ENCODE measurements at regions of chr2 and their contacts with region 1.

Region 1: DNA sequence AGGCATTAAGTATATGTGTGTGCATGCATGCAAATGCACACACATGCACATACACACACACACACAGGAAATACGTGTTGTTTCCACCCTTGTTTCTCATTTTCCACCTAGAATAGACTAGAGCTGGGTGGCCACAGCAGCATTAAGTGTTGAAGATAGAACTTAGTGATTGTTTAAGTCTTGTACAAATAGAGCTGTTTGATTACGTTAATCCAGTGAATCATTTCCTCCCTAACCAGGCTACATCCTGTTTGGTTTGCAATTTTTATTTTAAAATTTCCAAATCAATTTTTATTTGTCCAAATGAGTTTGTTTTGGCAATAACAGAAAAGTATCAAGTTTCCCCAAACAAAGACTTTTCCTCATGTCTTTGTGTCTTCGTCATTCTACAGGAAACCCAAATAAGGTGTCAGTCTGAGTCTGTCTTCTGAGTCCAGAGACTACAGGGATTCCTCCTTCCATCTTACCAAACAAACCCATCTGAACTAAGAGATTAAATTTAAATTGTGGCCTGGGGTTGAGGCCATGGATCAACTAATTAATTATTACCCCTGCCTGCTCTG is 74.6 kb upstream of the GALNT5 start:
- DNase-seq: no peak
- ATAC-seq: no peak
- H3K4me3 ChIP-seq: no peak overlapping the region
- H3K27ac ChIP-seq: no peak overlapping the region
- H3K4me1 ChIP-seq: peaks cover 0 to 6% of the 10 kb centered on the region in 2 experiments; a peak in 2 of 4 replicates
- H3K27me3 ChIP-seq: no peaks in the 10 kb centered on the region
- CTCF ChIP-seq: no peak
- POLR2A ChIP-seq: no peak
- RAD21 ChIP-seq: no peak

Region 2: DNA sequence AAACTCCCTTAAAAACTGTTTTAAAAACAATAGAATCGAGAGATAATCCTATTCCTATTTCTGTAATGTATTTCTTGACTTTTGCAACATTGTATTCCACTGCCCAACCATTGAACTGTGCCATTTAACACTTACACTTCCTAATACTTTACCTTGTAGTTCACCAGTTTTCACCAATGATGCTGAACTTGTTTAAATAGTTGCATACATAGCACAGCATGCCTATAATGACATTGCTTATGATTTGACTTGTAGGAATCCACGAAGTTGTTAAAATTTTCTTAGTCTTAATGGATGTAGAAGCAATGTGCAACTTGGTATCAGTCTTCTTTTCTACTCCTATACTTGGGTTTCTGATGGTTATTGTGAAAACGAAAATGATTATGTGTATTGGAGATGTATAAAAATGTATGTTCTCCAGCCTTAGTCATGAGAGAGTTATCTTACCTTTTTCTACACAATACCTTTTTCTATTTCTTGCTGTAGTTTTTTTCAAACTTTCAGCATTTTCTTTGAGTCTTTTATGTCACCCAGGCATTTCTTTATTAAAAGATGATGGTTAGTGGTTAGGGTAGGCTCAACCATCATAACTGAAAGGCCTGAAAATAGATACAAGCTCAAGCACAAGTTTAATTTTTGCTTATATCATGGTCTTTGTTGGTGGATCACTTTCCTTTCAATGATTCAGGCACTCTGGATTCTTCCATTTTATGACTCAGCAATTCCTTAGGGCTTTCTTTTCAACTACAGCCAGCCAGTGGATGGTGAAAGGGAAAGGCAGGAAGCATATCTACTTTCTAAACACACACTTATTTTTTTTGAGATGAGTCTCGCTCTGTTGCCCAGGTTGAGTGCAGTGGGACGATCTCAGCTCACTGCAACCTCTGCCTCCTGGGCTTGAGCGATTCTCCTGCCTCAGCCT is 737.4 kb before region 1 on chr2:
- CTCF ChIA-PET with region 1: no interaction called
- POLR2A ChIA-PET with region 1: no interaction called
- RAD21 ChIA-PET with region 1: no interaction called
- intact Hi-C with region 1: no loop called
- DNase-seq: no peak
- ATAC-seq: no peak
- H3K4me3 ChIP-seq: no peak overlapping the region
- H3K27ac ChIP-seq: no peak overlapping the region
- H3K4me1 ChIP-seq: peaks cover 0 to 17% of the 10 kb centered on the region in 2 experiments; a peak in 2 of 4 replicates
- H3K27me3 ChIP-seq: no peaks in the 10 kb centered on the region
- CTCF ChIP-seq: no peak
- POLR2A ChIP-seq: no peak
- RAD21 ChIP-seq: no peak

Region 3: GRCh38 chr2:157076526-157077161 is 106.3 kb before region 1 on chr2:
- CTCF ChIA-PET with region 1: no interaction called
- POLR2A ChIA-PET with region 1: no interaction called
- RAD21 ChIA-PET with region 1: interaction called in 1 of 2 experiments, 3 read pairs
- intact Hi-C with region 1: loop called (anchors 1 kb)
- DNase-seq: no peak
- ATAC-seq: no peak
- H3K4me3 ChIP-seq: no peak overlapping the region
- H3K27ac ChIP-seq: no peak overlapping the region
- H3K4me1 ChIP-seq: no peaks in the 10 kb centered on the region
- H3K27me3 ChIP-seq: no peaks in the 10 kb centered on the region
- CTCF ChIP-seq: no peak
- POLR2A ChIP-seq: no peak
- RAD21 ChIP-seq: no peak

Measured in HCT116 (cell line).